ENCODE measurements at regions of chr1 and their contacts with region 1.

Region 1: GRCh38 chr1:209576798-209577197 is 6.7 kb upstream of the CAMK1G start:
- DNase-seq: peak; percentile 75 to 88 (median 88)
- H3K4me3 ChIP-seq: no peak overlapping the region
- H3K27ac ChIP-seq: no peak overlapping the region
- H3K4me1 ChIP-seq: no peaks in the 10 kb centered on the region
- H3K27me3 ChIP-seq: no peaks in the 10 kb centered on the region
- CTCF ChIP-seq: peak; percentile 84 to 86 (median 85)
- EP300 ChIP-seq: no peak
- POLR2A ChIP-seq: no peak

Region 2: GRCh38 chr1:209627732-209628196 is 51.0 kb after region 1 on chr1:
- intact Hi-C with region 1: loop called in 2 of 4 experiments (anchors 5 kb)
- DNase-seq: peak; percentile 76 to 90 (median 86)
- H3K4me3 ChIP-seq: no peak overlapping the region
- H3K27ac ChIP-seq: no peak overlapping the region
- H3K4me1 ChIP-seq: peaks cover 8% of the 10 kb centered on the region
- H3K27me3 ChIP-seq: no peaks in the 10 kb centered on the region
- CTCF ChIP-seq: peak; percentile 82 to 92 (median 87)
- EP300 ChIP-seq: no peak
- POLR2A ChIP-seq: no peak

Region 3: DNA sequence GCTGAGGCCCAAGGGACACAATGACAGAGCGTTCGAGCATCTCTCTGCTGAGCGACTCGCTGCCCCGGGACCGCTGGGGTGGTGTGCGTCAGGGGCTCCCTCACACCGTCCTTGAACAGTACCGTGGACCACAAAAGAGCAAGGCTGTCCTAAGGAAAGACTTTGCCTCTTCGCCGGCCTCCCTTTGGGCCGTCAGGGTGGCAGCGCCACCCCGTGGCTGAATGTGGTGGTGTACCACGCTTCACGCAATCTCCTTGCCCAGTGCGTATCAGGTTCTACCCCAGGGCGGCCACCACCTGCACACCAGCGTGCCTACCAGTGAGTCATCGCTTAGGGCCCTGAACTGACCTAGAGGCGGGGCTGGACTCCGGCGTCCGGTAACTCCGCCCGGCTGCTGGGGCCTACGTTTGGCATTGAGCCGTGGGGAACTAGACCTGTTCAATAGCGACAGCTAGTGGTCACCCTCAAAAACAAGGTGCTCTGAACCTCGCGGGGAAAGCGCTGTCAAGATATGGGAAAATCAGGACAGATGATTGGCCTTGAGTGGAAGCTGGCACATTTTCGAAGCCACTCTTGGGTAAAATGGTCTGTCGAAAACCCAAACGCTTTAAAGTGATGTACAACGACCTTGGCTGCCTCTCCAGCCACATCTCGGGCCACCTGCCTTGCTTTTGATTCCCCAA is 170.9 kb after region 1 on chr1:
- intact Hi-C with region 1: loop called in 3 of 4 experiments (anchors 5 kb)
- DNase-seq: peak; percentile 93 to 96 (median 95)
- H3K4me3 ChIP-seq: no peak overlapping the region
- H3K27ac ChIP-seq: peak overlapping the region in 1 of 2 donors; percentile 31
- H3K4me1 ChIP-seq: peaks cover 8% of the 10 kb centered on the region
- H3K27me3 ChIP-seq: no peaks in the 10 kb centered on the region
- CTCF ChIP-seq: peak; percentile 81 to 100 (median 99)
- EP300 ChIP-seq: no peak
- POLR2A ChIP-seq: peak; percentile 3

Region 4: DNA sequence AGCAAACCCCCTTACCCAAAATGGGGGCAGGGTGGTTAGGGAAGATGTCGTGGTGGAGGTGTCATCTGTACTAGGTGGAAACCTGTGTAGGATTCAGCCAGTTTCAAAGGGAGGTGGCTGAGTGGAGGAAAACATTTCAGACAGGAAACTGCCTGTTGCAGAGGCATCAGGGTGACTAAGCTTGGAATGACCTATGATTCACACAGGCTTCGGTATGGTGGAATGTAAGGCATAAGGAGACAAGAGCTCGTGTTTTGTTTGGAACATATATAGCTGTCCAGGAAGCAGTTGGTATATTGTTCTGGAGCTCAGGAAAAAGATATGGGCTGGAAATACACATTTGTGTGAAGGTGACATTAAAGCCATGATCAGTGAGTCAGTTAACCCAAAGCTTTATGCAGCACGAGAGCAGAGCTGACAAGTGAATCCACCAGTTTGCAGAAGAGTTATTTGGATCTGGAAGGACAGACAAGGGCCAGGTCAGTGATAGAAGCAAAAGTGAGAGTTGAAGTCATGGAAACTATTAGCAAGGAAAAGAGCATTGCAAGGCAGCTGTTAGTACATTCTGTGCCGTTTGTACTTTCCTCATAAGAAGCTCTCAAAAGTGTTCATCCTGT is 263.2 kb after region 1 on chr1:
- intact Hi-C with region 1: loop called in 1 of 4 experiments (anchors 10 kb)
- DNase-seq: no peak
- H3K4me3 ChIP-seq: no peak overlapping the region
- H3K27ac ChIP-seq: no peak overlapping the region
- H3K4me1 ChIP-seq: no peaks in the 10 kb centered on the region
- H3K27me3 ChIP-seq: no peaks in the 10 kb centered on the region
- CTCF ChIP-seq: no peak
- EP300 ChIP-seq: no peak
- POLR2A ChIP-seq: no peak

Region 5: GRCh38 chr1:209911746-209912145 is 334.9 kb after region 1 on chr1:
- intact Hi-C with region 1: no loop called
- DNase-seq: no peak
- H3K4me3 ChIP-seq: no peak overlapping the region
- H3K27ac ChIP-seq: no peak overlapping the region
- H3K4me1 ChIP-seq: no peaks in the 10 kb centered on the region
- H3K27me3 ChIP-seq: no peaks in the 10 kb centered on the region
- CTCF ChIP-seq: no peak
- EP300 ChIP-seq: no peak
- POLR2A ChIP-seq: no peak

Region 6: DNA sequence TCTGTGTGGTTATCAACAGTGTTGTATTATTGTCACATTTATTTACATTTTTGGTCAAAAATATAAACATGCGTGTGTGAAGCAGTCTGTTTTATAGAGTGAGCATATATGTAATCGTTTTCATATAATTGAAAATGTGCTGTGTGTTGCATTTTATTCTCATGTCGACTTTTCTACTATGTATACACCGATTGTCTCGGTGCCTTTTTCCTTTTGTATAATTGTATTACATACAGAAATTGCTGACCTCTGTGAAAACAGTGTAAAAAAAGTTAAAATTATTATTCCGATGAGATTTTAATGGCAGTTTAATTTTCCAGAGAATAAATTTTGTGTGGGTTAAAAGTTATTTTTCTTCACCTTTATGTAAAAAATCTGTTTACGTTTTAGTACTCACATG is 593.4 kb after region 1 on chr1:
- intact Hi-C with region 1: no loop called
- DNase-seq: no peak
- H3K4me3 ChIP-seq: no peak overlapping the region
- H3K27ac ChIP-seq: no peak overlapping the region
- H3K4me1 ChIP-seq: no peaks in the 10 kb centered on the region
- H3K27me3 ChIP-seq: no peaks in the 10 kb centered on the region
- CTCF ChIP-seq: no peak
- EP300 ChIP-seq: no peak
- POLR2A ChIP-seq: no peak

Region 7: DNA sequence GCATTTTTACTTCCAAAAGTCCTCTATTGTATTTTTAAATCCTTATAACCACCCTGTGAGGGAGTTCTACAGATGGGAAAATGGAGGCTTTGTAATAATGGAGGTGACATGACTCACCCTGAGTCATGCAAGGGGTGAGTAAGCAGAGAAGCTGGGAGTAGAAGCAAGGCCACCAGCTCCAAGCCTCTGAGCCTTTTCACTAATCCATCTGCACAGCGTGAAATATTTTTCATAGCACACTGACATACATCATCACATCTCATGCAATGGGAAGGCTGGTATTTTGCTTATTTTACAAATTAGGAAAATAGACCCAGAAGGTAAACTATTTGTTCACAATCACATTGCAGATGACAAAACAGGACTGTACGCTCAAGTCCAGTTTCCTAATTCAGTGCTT is 1460.3 kb after region 1 on chr1:
- intact Hi-C with region 1: no loop called
- DNase-seq: no peak
- H3K4me3 ChIP-seq: no peak overlapping the region
- H3K27ac ChIP-seq: no peak overlapping the region
- H3K4me1 ChIP-seq: no peaks in the 10 kb centered on the region
- H3K27me3 ChIP-seq: no peaks in the 10 kb centered on the region
- CTCF ChIP-seq: no peak
- EP300 ChIP-seq: no peak
- POLR2A ChIP-seq: no peak

Region 8: GRCh38 chr1:211345719-211346118 is 1768.9 kb after region 1 on chr1:
- intact Hi-C with region 1: no loop called
- DNase-seq: no peak
- H3K4me3 ChIP-seq: no peak overlapping the region
- H3K27ac ChIP-seq: no peak overlapping the region
- H3K4me1 ChIP-seq: no peaks in the 10 kb centered on the region
- H3K27me3 ChIP-seq: no peaks in the 10 kb centered on the region
- CTCF ChIP-seq: no peak
- EP300 ChIP-seq: no peak
- POLR2A ChIP-seq: no peak

Measured in ovary (tissue), 10 donors.